ENCODE measurements at regions of chr2 and their contacts with region 1.

Region 1: DNA sequence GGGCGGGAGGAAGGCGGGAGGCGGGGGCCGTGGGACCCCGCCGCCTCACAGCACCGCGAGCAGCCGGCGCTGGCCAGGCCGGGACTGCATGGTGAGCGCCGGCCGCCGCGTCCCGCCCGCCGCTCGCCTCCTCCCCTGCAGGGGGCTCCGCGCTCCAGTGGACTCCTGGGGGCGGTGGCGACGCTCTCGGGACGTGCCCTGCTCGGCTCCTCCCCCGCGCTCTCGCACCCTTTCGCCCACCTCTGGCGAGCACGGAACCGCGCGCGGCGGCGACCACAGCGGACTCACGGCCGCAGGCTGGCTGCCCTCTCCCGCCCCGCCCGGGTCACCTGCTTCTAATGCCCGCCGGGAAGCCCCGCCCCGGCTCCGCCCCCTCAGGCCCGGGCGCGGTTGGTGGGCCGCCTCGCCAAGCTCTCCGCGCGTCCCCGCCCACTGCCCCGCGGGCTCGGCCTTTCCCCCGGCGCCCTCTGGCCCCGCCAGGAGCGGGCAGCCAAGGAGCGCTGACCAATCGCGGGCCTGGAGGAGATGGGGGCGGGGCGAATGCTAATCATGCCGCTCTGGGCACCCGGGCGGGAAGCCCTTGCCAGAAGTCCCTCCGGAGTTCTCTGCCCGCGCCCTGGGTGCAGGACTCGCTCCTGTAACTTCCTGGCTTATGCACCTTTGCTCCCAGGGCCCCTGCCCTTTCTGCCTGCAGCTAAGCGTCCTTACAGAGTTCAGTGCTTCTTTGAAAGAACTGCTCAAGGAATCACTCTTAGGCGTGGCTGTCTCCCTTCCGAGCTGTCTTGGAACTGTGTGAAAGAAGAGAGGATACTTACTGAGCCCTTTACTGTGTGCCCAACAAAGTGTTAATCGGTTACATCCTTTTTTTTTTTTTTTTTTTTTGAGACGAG is at the start of gene FZD5:
- DNase-seq: peak; percentile 99
- H3K4me3 ChIP-seq: peak within 1 kb of the TSS; percentile 68 to 87 (median 82)
- H3K27ac ChIP-seq: peak within 1 kb of the TSS; percentile 90 to 96 (median 96)
- H3K4me1 ChIP-seq: peaks cover 9 to 42% (median 33%) of the 10 kb centered on the region in 4 donors
- H3K27me3 ChIP-seq: no peaks in the 10 kb centered on the region
- CTCF ChIP-seq: peak; percentile 25 to 70 (median 55)
- EP300 ChIP-seq: peak; percentile 64
- POLR2A ChIP-seq: peak; percentile 91
- total RNA-seq, gene FZD5: 70.3 to 150 (median 141) TPM

Region 2: GRCh38 chr2:207828361-207829057 is 58.7 kb after region 1 on chr2:
- in situ Hi-C with region 1: no loop called
- intact Hi-C with region 1: loop called (anchors 10 kb)
- DNase-seq: no peak
- H3K4me3 ChIP-seq: no peak overlapping the region
- H3K27ac ChIP-seq: peak overlapping the region; percentile 75 to 84 (median 78)
- H3K4me1 ChIP-seq: peaks cover 19 to 49% (median 40%) of the 10 kb centered on the region in 4 donors
- H3K27me3 ChIP-seq: no peaks in the 10 kb centered on the region
- CTCF ChIP-seq: no peak
- EP300 ChIP-seq: no peak
- POLR2A ChIP-seq: no peak

Region 3: DNA sequence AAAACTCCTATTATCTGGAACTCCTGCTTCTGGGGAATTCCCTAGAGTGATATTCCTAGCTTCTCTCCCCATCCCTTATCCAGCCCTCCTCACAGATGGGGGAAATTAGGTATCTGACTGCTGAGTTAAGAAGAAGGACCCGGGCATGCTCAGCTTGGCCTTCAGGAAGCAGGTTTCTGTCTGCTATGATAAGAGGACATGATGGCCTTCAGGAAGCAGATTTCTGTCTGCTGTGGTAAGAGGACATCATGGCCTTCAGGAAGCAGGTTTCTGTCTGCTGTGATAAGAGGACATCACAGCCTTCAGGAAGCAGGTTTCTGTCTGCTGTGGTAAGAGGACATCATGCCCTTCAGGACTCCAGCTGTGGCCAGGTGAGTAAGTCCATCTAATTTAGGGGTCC is 190.2 kb after region 1 on chr2:
- in situ Hi-C with region 1: no loop called
- intact Hi-C with region 1: loop called (anchors 5 kb)
- DNase-seq: no peak
- H3K4me3 ChIP-seq: no peak overlapping the region
- H3K27ac ChIP-seq: no peak overlapping the region
- H3K4me1 ChIP-seq: no peaks in the 10 kb centered on the region
- H3K27me3 ChIP-seq: no peaks in the 10 kb centered on the region
- CTCF ChIP-seq: no peak
- EP300 ChIP-seq: no peak
- POLR2A ChIP-seq: no peak

Region 4: GRCh38 chr2:207974216-207974605 is 204.4 kb after region 1 on chr2:
- in situ Hi-C with region 1: no loop called
- intact Hi-C with region 1: loop called (anchors 5 kb)
- DNase-seq: no peak
- H3K4me3 ChIP-seq: no peak overlapping the region
- H3K27ac ChIP-seq: no peak overlapping the region
- H3K4me1 ChIP-seq: peaks cover 11 to 27% (median 19%) of the 10 kb centered on the region in 4 donors
- H3K27me3 ChIP-seq: no peaks in the 10 kb centered on the region
- CTCF ChIP-seq: no peak
- EP300 ChIP-seq: no peak
- POLR2A ChIP-seq: no peak

Region 5: DNA sequence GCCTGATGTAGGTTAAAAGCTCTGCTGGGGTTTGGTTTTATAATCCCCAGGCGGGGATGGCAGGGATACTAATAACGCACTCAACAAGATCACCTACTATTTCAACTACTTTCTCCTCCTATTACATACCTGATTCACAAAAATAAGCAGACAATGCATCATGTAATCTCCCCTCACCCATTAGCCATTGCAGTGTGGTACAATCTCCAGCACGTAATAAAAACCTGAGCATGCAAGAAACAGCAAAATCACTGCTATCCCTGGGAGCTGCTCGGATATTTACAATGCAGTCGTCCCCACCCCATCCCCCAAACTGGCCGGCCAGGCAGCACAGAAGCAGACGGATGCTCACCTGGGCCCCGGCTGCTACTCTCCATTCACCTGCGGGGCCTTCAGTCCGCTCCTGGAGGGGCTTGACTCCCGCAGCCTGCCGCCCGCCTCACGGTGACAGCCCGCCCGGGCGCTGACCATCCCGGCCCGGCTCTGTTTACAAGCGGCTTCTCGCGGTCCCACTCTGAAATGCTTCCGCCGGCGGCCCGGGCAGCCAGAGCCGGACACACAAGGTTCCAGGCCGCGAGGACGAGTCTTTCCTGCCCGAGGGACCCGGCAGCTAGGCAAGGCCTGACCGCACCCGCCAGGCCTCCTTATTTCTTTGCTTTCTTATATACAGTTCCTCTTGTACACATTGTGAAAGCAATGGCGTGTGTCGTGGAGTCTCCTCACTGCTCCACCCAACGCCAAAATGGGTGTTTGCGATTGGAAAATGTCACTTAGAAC is 255.4 kb after region 1 on chr2 and contains the start of gene PLEKHM3:
- in situ Hi-C with region 1: no loop called
- intact Hi-C with region 1: loop called (anchors 10 kb)
- DNase-seq: peak; percentile 90
- H3K4me3 ChIP-seq: peak within 1 kb of the TSS; percentile 45 to 98 (median 72)
- H3K27ac ChIP-seq: peak within 1 kb of the TSS; percentile 71 to 87 (median 76)
- H3K4me1 ChIP-seq: peaks cover 4 to 19% (median 15%) of the 10 kb centered on the region in 4 donors
- H3K27me3 ChIP-seq: no peaks in the 10 kb centered on the region
- CTCF ChIP-seq: no peak
- EP300 ChIP-seq: no peak
- POLR2A ChIP-seq: peak; percentile 80
- total RNA-seq, gene PLEKHM3: 19.1 to 26.5 (median 24.0) TPM

Region 6: DNA sequence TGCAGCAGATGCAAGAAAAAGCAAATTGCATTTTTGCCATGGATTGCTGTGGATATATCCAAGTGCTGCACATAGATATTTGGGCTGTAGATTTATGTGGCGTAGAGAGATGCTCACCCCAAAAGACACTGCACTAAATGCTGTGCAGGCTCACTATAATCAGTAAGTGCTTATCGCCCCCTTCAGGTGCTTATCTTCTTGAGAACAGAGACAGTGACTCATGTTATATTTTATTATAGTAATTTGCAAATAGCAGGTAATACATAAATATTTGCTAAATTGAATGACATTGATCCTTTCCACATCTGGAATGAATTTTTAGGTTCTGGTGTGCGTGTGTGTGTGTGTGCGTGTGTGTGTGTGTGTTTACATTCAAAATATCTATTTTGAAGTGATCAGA is 292.3 kb after region 1 on chr2:
- in situ Hi-C with region 1: loop called in 1 of 4 experiments (anchors 10 kb)
- intact Hi-C with region 1: no loop called
- DNase-seq: no peak
- H3K4me3 ChIP-seq: no peak overlapping the region
- H3K27ac ChIP-seq: no peak overlapping the region
- H3K4me1 ChIP-seq: no peaks in the 10 kb centered on the region
- H3K27me3 ChIP-seq: no peaks in the 10 kb centered on the region
- CTCF ChIP-seq: peak in 4 of 5 experiments; percentile 25 to 42 (median 33)
- EP300 ChIP-seq: no peak
- POLR2A ChIP-seq: no peak